Lower leg skin (tissue), 4 donors: ENCODE measurements at regions of chr13 and their contacts with region 1.

Region 1: GRCh38 chr13:98484289-98485219 is 92.4 kb downstream of the STK24 start:
- DNase-seq: peak; percentile 91 to 95
- H3K4me3 ChIP-seq: no peak overlapping the region
- CTCF ChIP-seq: no peak
- POLR2A ChIP-seq: no peak

Region 2: GRCh38 chr13:98466634-98467236 is 17.8 kb before region 1 on chr13:
- intact Hi-C with region 1: no loop called
- DNase-seq: no peak
- H3K4me3 ChIP-seq: no peak overlapping the region
- CTCF ChIP-seq: no peak
- POLR2A ChIP-seq: no peak

Region 3: GRCh38 chr13:98565726-98566565 is 81.4 kb after region 1 on chr13:
- intact Hi-C with region 1: loop called (anchors 10 kb)
- DNase-seq: peak in 1 of 2 donors; percentile 85
- H3K4me3 ChIP-seq: no peak overlapping the region
- CTCF ChIP-seq: no peak
- POLR2A ChIP-seq: no peak